CD4-positive, alpha-beta T cell (primary cell): ENCODE measurements at regions of chr11 and their contacts with region 1.

Region 1: DNA sequence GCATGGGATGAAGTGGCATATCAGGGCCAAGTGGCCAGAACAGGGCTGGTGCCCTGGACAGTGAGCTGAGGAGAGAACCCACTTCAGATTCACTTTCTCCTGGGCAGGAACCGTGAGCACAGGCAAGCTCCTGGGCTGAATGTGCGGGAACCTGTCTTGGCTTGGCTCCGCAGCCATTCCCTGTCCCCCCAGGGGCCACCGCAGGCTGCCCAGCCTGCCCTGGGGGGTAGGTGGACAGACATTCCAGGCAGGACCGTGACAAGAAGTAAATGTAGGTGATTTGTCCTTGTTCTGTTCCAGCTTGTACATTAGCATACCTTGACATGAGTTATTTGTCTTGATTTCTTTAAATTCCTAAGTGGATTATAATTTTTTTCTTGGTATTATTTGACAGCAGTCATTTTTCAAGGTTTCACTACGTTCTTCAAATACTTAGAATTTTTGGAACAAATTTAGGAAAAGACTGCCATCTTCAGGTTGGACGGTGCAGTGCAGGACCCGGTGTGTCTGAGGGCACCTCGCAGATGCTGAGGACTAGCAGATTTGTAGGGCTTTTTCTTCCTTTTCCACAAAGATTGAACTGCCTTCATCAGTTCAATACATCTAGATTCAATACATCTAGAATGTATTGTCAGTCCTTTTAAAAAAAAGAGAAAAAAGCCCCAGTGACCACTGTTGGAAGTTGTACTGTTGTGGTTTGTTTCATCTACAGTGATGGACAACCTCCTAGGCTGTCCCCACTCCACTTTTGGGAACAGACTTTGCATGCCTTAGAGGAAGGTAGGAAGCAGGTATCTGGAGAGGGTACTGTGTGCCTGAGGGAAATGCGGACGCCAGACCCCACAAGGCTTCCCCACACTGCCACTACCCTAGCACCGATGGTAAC is 115.1 kb upstream of the RASSF10 start:
- DNase-seq: peak; percentile 9 to 64 (median 30)
- ATAC-seq: peak; percentile 71
- H3K4me3 ChIP-seq: no peak overlapping the region
- H3K4me3 Mint-ChIP-seq: no peak overlapping the region
- H3K27ac ChIP-seq: no peak overlapping the region
- H3K27ac Mint-ChIP-seq: no peak overlapping the region
- H3K4me1 ChIP-seq: no peaks in the 10 kb centered on the region
- H3K4me1 Mint-ChIP-seq: no peaks in the 10 kb centered on the region
- H3K27me3 ChIP-seq: peaks cover 9 to 13% of the 10 kb centered on the region in 2 experiments
- H3K27me3 Mint-ChIP-seq: peaks cover 18% of the 10 kb centered on the region
- CTCF ChIP-seq: peak; percentile 71

Region 2: DNA sequence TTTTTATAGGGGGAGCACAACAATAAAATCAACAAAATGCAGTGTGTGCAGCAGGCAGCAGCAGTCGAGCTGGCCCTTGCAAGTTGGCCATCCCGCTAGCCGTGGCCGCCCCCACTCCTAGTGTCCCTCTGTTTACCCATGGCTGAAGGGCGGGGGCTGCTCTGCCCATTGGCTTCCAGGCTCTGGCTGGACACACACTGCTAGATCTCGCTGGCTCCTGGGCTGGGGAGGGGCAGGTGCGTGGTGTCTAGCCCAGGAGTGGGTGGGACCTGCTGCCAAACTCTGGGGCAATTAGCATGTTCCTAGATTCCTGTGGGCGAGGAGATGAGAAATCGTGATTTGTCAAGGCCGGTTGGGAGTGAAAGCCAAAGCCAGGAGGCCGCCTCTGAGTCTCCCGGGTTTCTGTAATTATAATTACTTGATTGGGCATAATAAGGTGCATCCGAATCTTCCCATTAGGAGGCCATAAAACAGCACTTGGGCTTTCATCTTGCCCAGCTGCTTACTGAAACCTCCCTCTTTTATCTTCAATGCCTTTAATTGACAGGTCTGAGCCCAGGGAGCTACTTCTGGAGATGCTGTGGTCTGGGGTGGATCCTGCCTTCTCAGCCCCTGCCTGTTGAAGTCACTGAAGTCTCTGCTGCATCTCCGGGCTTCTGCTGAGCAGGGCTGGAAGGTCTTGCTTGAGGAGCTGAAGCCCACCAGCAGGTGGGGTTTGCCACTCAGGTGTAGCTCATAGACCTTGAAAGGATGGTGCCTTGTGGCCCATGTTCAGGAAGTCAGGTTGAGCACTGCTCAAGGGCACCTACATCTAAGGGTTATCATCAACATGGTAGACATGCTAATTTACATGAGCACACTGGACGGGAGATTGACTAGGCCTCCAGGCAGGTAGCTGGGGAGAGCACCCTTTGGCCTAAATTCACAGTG is 841.1 kb before region 1 on chr11:
- CTCF ChIA-PET with region 1: no interaction called
- POLR2A ChIA-PET with region 1: no interaction called
- intact Hi-C with region 1: loop called in 1 of 2 experiments (anchors 5 kb)
- DNase-seq: peak in 5 of 14 experiments; percentile 4 to 44 (median 16)
- ATAC-seq: no peak
- H3K4me3 ChIP-seq: no peak overlapping the region
- H3K4me3 Mint-ChIP-seq: no peak overlapping the region
- H3K27ac ChIP-seq: no peak overlapping the region
- H3K27ac Mint-ChIP-seq: no peak overlapping the region
- H3K4me1 ChIP-seq: no peaks in the 10 kb centered on the region
- H3K4me1 Mint-ChIP-seq: no peaks in the 10 kb centered on the region
- H3K27me3 ChIP-seq: no peaks in the 10 kb centered on the region
- H3K27me3 Mint-ChIP-seq: no peaks in the 10 kb centered on the region
- CTCF ChIP-seq: no peak

Region 3: GRCh38 chr11:12288212-12288930 is 605.7 kb before region 1 on chr11:
- CTCF ChIA-PET with region 1: interaction called, 4 read pairs
- POLR2A ChIA-PET with region 1: no interaction called
- intact Hi-C with region 1: loop called (anchors 1 to 2 kb)
- DNase-seq: peak; percentile 15 to 69 (median 32)
- ATAC-seq: no peak
- H3K4me3 ChIP-seq: no peak overlapping the region
- H3K4me3 Mint-ChIP-seq: no peak overlapping the region
- H3K27ac ChIP-seq: no peak overlapping the region
- H3K27ac Mint-ChIP-seq: no peak overlapping the region
- H3K4me1 ChIP-seq: peaks cover 10% of the 10 kb centered on the region
- H3K4me1 Mint-ChIP-seq: peaks cover 18% of the 10 kb centered on the region
- H3K27me3 ChIP-seq: no peaks in the 10 kb centered on the region
- H3K27me3 Mint-ChIP-seq: no peaks in the 10 kb centered on the region
- CTCF ChIP-seq: peak; percentile 73

Region 4: DNA sequence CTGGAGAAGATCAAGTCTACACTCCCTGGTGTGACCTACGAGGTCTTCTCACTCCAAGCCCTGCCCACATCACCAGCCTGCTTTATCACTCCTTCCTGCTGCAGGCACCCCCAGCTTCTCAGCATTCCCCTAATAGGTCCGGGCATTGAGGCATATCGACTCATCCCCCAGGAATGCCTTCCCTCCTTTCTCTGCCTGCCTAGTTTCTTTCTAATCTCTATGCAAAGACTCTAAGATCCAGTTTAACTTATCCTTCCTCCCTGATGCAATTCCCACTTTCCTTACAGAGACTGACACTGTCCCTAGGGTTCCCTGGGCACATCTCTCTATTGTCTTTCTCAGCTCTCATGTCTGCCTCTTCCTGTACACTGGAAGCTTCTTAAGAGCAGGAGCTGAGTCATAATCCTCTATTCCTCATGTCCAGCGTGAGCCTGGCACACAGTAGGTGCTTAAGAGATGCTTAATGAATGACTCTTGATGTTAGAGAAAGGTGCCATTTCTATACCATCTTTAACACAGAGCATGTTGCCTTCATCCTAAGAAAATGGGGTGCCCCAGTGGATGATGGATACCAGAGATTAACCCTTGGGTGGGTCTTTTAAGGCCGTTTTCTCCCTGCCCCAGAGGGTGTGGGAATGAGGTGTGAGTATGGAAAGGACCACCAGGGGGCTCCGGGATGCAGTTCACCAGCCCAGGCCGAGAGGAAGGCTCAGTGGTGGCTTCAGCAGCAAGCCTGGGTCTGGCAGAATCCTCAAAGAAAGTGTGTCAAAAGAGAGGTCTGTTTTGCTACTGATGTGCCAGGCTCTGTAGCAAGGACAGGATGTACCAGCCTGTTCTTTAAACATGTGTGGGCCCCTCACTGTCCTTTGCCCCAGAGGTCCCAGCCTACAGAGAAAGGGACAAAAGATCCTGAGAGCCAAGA is 482.0 kb before region 1 on chr11:
- CTCF ChIA-PET with region 1: interaction called, 3 read pairs
- POLR2A ChIA-PET with region 1: no interaction called
- intact Hi-C with region 1: loop called (anchors 2 to 10 kb)
- DNase-seq: peak in 8 of 14 experiments; percentile 2 to 44 (median 10)
- ATAC-seq: peak; percentile 46
- H3K4me3 ChIP-seq: no peak overlapping the region
- H3K4me3 Mint-ChIP-seq: no peak overlapping the region
- H3K27ac ChIP-seq: no peak overlapping the region
- H3K27ac Mint-ChIP-seq: no peak overlapping the region
- H3K4me1 ChIP-seq: no peaks in the 10 kb centered on the region
- H3K4me1 Mint-ChIP-seq: no peaks in the 10 kb centered on the region
- H3K27me3 ChIP-seq: peaks cover 2 to 5% of the 10 kb centered on the region in 2 experiments
- H3K27me3 Mint-ChIP-seq: peaks cover 14% of the 10 kb centered on the region
- CTCF ChIP-seq: peak; percentile 48

Region 5: DNA sequence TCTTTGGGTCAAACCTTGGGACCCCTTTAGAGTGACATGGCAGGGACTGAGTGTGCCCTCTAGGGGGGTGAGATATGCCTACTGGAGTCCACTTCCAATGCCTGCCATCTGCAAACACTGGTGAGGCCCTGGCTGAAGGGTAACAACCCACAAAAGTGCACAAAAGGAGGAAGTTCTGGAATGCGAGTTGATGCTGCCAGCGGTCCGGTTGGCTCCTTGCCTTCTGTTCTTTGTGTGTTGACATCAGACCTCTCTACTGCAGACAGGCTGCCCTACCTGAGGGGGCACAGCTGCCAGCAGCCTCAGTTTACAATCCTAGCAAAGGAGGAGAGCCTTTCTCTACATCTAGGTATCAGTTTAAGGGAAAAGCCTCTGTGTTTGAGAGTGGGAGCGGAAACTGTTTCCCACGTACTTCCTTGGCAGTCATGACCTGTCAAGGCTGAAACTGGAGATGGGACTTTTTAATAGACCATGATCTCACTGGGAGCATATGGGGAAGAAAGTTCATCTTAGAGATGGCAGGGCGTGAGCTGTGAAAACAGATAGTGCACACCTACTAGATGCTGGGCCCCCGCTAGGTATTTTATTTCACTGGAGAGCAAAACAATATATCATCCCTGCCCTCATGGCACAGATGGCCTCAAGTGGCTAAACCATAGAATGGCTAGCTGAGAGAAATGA is 410.8 kb after region 1 on chr11:
- CTCF ChIA-PET with region 1: no interaction called
- POLR2A ChIA-PET with region 1: no interaction called
- intact Hi-C with region 1: no loop called
- DNase-seq: no peak
- ATAC-seq: no peak
- H3K4me3 ChIP-seq: no peak overlapping the region
- H3K4me3 Mint-ChIP-seq: peak overlapping the region; percentile 5
- H3K27ac ChIP-seq: no peak overlapping the region
- H3K27ac Mint-ChIP-seq: no peak overlapping the region
- H3K4me1 ChIP-seq: peaks cover 78% of the 10 kb centered on the region
- H3K4me1 Mint-ChIP-seq: peaks cover 1% of the 10 kb centered on the region
- H3K27me3 ChIP-seq: no peaks in the 10 kb centered on the region
- H3K27me3 Mint-ChIP-seq: no peaks in the 10 kb centered on the region
- CTCF ChIP-seq: no peak